ENCODE measurements at regions of chr4 and their contacts with region 1.

Region 1: GRCh38 chr4:88503344-88503743 is 20.2 kb downstream of the PYURF start:
- DNase-seq: no peak
- ATAC-seq: no peak

Region 2: DNA sequence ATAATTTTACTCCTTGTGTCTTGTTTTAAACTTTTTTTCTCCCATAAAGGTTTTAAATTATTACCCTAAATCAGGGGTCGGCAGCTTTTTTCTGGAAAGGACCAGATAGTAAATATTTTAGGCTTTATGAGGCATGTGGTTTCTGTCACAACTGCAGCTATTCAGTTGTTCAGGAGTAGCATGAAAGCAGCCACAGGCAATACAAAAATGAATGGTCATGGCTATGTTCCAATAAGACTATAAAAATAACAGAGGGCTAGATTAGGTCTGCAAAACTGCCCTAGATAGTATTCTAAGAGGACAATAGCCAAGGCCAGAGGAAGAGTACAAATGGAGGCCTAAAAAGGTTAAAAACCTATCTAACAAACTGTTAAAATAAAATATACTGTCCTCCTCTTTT is 21.8 kb before region 1 on chr4:
- intact Hi-C with region 1: loop called (anchors 1 kb)
- DNase-seq: no peak
- ATAC-seq: no peak

Region 3: DNA sequence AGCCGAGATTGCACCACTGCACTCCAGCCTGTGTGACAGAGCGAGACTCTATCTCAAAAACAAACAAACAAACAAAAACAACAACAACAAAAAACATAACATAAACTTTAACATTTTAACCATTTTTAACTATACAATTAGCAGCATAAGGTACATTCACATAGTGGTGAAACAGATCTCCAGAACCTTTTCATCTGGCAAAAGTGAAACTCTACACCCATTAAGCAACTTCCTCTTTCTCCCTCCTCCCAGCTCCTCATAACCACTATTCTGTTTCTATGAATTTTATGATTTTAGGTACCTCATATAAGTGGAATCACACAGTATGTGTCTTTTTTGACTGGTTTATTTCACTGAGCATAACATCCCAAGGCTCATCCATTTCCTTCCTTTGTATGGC is 450.1 kb after region 1 on chr4:
- intact Hi-C with region 1: no loop called
- DNase-seq: no peak
- ATAC-seq: no peak